ENCODE measurements at regions of chr15 and their contacts with region 1.

Region 1: DNA sequence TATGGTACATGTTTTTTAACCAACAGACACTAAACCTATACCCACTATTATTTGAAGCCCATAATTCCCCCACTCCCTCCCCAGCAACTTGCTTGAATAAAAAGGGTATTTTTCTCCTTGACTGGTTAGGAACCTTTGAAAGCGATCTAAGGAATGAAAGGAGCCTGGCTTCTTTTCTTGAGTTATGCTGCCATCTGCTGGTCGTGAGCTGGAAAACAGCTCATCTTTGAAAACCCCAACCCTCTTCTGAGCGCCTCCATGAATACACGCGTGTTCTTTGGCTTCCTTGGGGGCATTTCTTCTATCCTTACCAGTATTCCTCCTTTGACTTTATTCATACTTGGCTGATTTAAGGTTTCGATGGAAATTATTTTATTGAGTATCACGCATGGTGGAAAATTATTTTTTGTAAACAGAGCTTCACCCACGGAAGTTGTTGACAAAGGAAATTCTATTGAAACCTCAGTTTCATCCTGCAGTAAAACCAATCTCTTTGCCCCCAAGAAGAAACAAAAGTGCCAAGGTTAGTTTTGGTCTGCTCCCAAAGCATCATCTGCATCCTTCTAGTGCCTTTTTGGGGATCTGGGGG is 171.6 kb downstream of the SV2B start:
- DNase-seq: peak in 1 of 2 donors; percentile 53
- ATAC-seq: peak; percentile 63

Region 2: DNA sequence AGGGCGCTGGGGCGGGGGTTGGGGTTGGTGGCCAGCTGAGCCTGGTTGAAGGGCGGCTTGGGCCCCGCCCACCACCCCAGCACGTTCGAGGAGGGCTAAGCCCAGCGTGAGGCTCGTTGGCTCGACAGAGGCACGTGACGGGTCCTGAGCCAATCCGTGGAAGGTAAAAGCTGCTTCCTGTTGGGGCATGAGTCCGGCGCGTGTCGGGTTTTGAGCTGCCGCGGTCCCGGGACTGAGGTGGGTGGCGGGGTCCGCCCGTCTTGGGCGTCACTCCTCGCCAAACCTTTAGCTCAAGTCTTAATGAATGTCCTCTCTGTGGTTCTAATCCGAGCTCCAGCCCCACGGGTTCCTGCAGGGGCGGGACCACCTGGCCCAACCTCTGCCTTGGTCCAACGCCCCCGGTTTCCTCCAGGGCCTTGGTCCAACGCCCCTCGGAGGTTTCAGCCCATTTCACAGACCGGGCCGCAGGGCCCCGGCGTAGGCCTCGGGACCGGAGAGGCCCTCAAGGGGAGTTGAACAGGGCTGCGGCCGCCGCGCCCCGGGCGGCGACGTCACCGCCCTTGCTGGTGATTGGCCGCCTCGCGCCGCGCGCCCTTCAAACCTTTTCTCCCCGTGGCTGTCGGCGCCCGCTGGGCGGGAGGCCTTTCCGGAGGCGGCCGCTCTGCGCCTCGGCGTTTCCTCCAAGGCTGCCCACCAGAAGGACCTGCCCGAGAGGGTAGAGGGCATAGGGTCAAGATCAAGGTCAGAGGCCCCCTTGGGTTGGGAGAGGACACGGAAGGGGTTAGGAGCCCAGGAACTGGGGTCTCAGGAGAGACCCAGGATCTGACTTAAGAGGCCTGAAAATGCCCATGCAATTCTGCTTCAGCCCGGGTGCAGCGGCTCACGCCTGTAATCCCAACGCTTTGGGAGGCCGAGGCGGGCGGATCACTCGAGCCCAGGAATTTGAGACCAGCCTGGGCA is 316.7 kb before region 1 on chr15 and contains the start of gene RCCD1:
- intact Hi-C with region 1: loop called in 1 of 2 experiments (anchors 10 kb)
- DNase-seq: peak; percentile 95 to 97
- ATAC-seq: peak; percentile 86
- total RNA-seq, gene RCCD1: 15.3 to 17.1 TPM

Region 3: GRCh38 chr15:91055548-91056331 is 215.9 kb before region 1 on chr15:
- intact Hi-C with region 1: loop called in 1 of 2 experiments (anchors 5 kb)
- DNase-seq: peak in 1 of 2 donors; percentile 47
- ATAC-seq: peak; percentile 97

Measured in left colon (tissue), 2 donors.